Endothelial cell of umbilical vein (primary cell): ENCODE measurements at regions of chr18 and their contacts with region 1.

Region 1: DNA sequence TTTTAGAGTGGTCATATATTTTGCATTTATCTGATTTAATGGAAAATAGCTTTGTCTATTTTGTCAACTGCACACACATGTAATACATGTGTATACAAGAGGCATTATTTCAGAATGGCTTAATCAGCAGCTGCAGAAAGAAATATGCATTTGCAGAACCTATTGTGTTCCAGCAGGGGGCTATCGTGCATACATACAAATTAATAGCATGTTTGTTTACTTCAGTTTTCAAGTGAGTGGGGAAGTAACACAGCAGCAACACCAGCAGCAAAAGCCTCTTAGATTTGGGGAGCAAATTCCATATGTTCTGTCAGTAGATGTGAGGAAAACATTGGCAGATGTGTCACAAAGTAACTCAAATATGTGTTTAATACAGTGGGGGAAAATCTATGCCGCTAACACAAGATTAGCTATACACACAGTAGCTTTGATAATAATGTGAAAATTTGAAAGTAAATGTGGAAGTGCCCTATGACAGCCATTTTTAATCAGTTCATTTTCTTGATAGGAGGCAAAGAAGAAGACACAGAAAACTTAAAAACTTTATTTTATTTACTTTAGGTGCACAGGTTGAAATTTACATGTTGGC is 218.1 kb downstream of the WDR7 start:
- DNase-seq: peak; percentile 64
- H3K4me3 ChIP-seq: no peak overlapping the region
- H3K27ac ChIP-seq: no peak overlapping the region
- H3K4me1 ChIP-seq: peaks cover 10% of the 10 kb centered on the region
- H3K27me3 ChIP-seq: no peaks in the 10 kb centered on the region
- CTCF ChIP-seq: peak; percentile 58 to 63
- POLR2A ChIP-seq: no peak

Region 2: GRCh38 chr18:56748698-56749268 is 120.5 kb before region 1 on chr18:
- CTCF ChIA-PET with region 1: interaction called, 6 read pairs
- POLR2A ChIA-PET with region 1: no interaction called
- dilution Hi-C with region 1: no loop called
- intact Hi-C with region 1: loop called (anchors 2 kb)
- DNase-seq: peak; percentile 60
- H3K4me3 ChIP-seq: no peak overlapping the region
- H3K27ac ChIP-seq: no peak overlapping the region
- H3K4me1 ChIP-seq: peaks cover 4% of the 10 kb centered on the region
- H3K27me3 ChIP-seq: no peaks in the 10 kb centered on the region
- CTCF ChIP-seq: peak; percentile 24 to 40
- POLR2A ChIP-seq: no peak

Region 3: GRCh38 chr18:56851774-56852173 is 17.5 kb before region 1 on chr18:
- CTCF ChIA-PET with region 1: interaction called, 15 read pairs
- POLR2A ChIA-PET with region 1: no interaction called
- dilution Hi-C with region 1: no loop called
- intact Hi-C with region 1: no loop called
- DNase-seq: no peak
- H3K4me3 ChIP-seq: no peak overlapping the region
- H3K27ac ChIP-seq: no peak overlapping the region
- H3K4me1 ChIP-seq: no peaks in the 10 kb centered on the region
- H3K27me3 ChIP-seq: no peaks in the 10 kb centered on the region
- CTCF ChIP-seq: no peak
- POLR2A ChIP-seq: no peak

Region 4: GRCh38 chr18:56890632-56891031 is 21.3 kb after region 1 on chr18:
- CTCF ChIA-PET with region 1: interaction called, 20 read pairs
- POLR2A ChIA-PET with region 1: no interaction called
- dilution Hi-C with region 1: no loop called
- intact Hi-C with region 1: no loop called
- DNase-seq: peak; percentile 77
- H3K4me3 ChIP-seq: no peak overlapping the region
- H3K27ac ChIP-seq: peak overlapping the region; percentile 85
- H3K4me1 ChIP-seq: peaks cover 23% of the 10 kb centered on the region
- H3K27me3 ChIP-seq: no peaks in the 10 kb centered on the region
- CTCF ChIP-seq: no peak
- POLR2A ChIP-seq: no peak

Region 5: GRCh38 chr18:57029761-57030160 is 160.5 kb after region 1 on chr18:
- CTCF ChIA-PET with region 1: interaction called, 11 read pairs
- POLR2A ChIA-PET with region 1: no interaction called
- dilution Hi-C with region 1: no loop called
- intact Hi-C with region 1: no loop called
- DNase-seq: no peak
- H3K4me3 ChIP-seq: no peak overlapping the region
- H3K27ac ChIP-seq: no peak overlapping the region
- H3K4me1 ChIP-seq: no peaks in the 10 kb centered on the region
- H3K27me3 ChIP-seq: no peaks in the 10 kb centered on the region
- CTCF ChIP-seq: no peak
- POLR2A ChIP-seq: no peak

Region 6: DNA sequence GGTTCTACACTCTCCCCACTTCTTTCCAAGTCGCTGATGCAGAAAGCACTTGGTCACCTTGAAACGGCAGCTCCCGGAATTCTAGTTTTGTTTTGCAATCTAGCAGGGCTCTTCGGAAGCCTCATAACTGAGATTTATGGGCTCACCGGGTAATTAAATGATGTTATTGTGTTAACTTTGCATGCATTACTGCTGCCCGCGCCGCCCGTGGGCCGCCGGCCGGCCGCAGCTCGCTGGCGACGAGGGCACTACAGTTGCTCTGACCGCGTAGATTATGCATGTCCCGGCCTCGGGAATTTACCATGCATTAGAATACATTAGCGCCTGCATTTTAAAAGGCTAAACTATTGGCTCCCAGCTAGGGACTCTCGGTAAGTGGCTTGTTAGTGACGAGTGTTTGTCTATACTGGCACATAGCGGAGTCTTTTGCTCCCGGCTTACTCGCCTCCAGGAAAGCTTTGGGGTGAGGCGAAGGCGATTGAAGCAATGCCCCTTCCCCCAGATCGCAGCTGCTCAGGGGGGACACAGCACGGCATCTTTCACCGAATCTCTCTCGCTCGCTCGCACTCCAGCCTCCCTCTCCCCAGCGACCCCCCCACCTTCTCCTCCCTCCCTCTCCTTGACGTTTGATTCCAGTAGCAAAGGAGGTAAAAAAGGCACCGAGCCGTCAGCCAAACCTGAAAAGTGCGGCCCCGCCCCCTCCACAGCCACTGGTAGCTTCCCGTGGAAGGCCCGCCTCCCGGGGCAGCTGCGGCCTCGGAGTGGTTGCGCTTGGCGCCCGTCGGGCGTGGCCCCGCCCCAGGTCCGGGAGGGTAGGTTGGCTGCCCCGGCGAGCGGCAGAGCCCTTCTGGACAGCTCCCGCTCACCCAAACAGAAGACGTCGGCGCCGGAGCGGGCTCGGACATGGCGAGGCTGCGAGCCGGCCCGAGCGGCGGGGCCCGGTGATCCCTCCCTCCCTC is 565.5 kb after region 1 on chr18 and contains the start of gene ONECUT2:
- CTCF ChIA-PET with region 1: interaction called, 14 read pairs
- POLR2A ChIA-PET with region 1: no interaction called
- dilution Hi-C with region 1: no loop called
- intact Hi-C with region 1: loop called (anchors 1 kb)
- DNase-seq: peak; percentile 91
- H3K4me3 ChIP-seq: peak within 1 kb of the TSS; percentile 31 to 58 (median 46)
- H3K27ac ChIP-seq: no peak within 1 kb of the TSS
- H3K4me1 ChIP-seq: peaks cover 18% of the 10 kb centered on the region
- H3K27me3 ChIP-seq: peaks cover 87 to 92% of the 10 kb centered on the region in 2 experiments
- CTCF ChIP-seq: no peak
- POLR2A ChIP-seq: no peak
- total RNA-seq, gene ONECUT2: 0.05 and 0.62 TPM in 2 replicates

Region 7: GRCh38 chr18:57561728-57562423 is 692.6 kb after region 1 on chr18:
- CTCF ChIA-PET with region 1: interaction called, 12 read pairs
- POLR2A ChIA-PET with region 1: no interaction called
- dilution Hi-C with region 1: no loop called
- intact Hi-C with region 1: loop called (anchors 5 kb)
- DNase-seq: peak; percentile 49
- H3K4me3 ChIP-seq: no peak overlapping the region
- H3K27ac ChIP-seq: no peak overlapping the region
- H3K4me1 ChIP-seq: no peaks in the 10 kb centered on the region
- H3K27me3 ChIP-seq: no peaks in the 10 kb centered on the region
- CTCF ChIP-seq: peak; percentile 59 to 75
- POLR2A ChIP-seq: no peak